OCI-LY7 (cell line): ENCODE measurements at regions of chr1 and their contacts with region 1.

Region 1: DNA sequence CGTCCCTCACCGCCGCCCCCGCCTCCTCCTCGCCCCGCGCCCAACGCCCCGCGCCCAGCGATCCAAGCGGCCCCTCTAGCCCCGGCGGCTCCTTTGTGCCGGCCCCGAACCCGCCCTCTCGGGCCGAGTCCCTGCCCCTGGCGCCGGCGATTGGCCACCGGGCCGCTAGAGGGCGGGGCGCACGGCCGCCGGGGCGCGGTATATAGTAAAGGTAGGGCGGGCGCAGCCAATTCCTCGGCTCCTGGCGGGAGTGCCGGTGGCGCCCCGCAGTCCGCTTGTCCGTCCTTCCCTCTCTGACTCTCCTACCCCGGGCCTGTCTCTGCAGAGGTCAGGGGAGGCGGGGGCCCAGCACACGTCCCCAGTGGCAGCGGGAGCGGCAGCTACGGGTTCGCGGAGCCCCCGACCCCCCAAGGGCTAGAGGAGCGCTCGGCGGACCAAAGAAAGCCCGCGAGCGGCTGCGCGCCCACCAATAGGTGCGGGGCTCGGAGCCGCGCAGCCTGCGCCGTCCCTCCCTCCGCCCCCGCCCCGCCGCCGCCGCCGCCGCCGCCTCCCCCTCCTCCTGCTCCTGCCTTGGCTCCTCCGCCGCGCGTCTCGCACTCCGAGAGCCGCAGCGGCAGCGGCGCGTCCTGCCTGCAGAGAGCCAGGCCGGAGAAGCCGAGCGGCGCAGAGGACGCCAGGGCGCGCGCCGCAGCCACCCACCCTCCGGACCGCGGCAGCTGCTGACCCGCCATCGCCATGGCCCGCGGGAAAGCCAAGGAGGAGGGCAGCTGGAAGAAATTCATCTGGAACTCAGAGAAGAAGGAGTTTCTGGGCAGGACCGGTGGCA is at the start of gene ATP1B1:
- DNase-seq: peak; percentile 89
- H3K4me3 ChIP-seq: peak within 1 kb of the TSS; percentile 94
- H3K27ac ChIP-seq: peak within 1 kb of the TSS; percentile 91
- H3K4me1 ChIP-seq: peaks cover 35% of the 10 kb centered on the region
- CTCF ChIP-seq: 0 out of 2 replicates have a peak, but pooled peaks have one; percentile 10
- total RNA-seq, gene ATP1B1: 14.5 and 17.5 TPM in 2 replicates

Region 2: GRCh38 chr1:169119405-169119804 is 13.1 kb after region 1 on chr1:
- CTCF ChIA-PET with region 1: interaction called, 3 read pairs
- POLR2A ChIA-PET with region 1: interaction called, 17 read pairs
- intact Hi-C with region 1: no loop called
- DNase-seq: no peak
- H3K4me3 ChIP-seq: no peak overlapping the region
- H3K27ac ChIP-seq: no peak overlapping the region
- H3K4me1 ChIP-seq: peaks cover 15% of the 10 kb centered on the region
- CTCF ChIP-seq: no peak

Region 3: DNA sequence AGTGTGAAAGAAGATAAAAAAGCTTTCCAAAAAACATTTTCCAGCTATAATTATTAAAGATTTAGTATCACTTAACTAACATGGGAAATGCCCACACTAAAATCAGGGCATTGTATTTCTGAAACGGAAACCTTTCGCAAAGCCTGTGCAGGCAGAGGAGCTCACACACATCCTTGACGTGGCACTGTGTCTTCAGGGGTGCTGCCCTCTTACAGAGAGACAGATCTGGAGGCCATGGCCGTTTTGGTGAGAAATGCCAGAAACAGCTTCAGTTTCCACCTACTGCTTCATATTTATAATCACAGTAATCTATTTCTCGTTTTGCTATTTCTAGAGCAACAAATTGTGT is 26.9 kb after region 1 on chr1:
- CTCF ChIA-PET with region 1: no interaction called
- POLR2A ChIA-PET with region 1: no interaction called
- intact Hi-C with region 1: no loop called
- DNase-seq: no peak
- H3K4me3 ChIP-seq: no peak overlapping the region
- H3K27ac ChIP-seq: no peak overlapping the region
- H3K4me1 ChIP-seq: no peaks in the 10 kb centered on the region
- CTCF ChIP-seq: no peak

Region 4: GRCh38 chr1:169367486-169368405 is 261.4 kb after region 1 on chr1 and contains the starts of genes BLZF1 and NME7:
- CTCF ChIA-PET with region 1: no interaction called
- POLR2A ChIA-PET with region 1: interaction called, 3 read pairs
- intact Hi-C with region 1: loop called (anchors 5 kb)
- DNase-seq: peak; percentile 97
- H3K4me3 ChIP-seq: peak within 1 kb of the TSS; percentile 95
- H3K27ac ChIP-seq: peak within 1 kb of the TSS; percentile 74
- H3K4me1 ChIP-seq: peaks cover 20% of the 10 kb centered on the region
- CTCF ChIP-seq: no peak
- total RNA-seq, gene BLZF1: 4.9 and 7.1 TPM in 2 replicates
- total RNA-seq, gene NME7: 4.2 and 9.3 TPM in 2 replicates

Region 5: GRCh38 chr1:169794530-169795416 is 688.5 kb after region 1 on chr1 and contains the start of gene METTL18:
- CTCF ChIA-PET with region 1: no interaction called
- POLR2A ChIA-PET with region 1: interaction called, 5 read pairs
- intact Hi-C with region 1: loop called (anchors 2 kb)
- DNase-seq: peak; percentile 95
- H3K4me3 ChIP-seq: peak within 1 kb of the TSS; percentile 85
- H3K27ac ChIP-seq: peak within 1 kb of the TSS; percentile 59
- H3K4me1 ChIP-seq: peaks cover 43% of the 10 kb centered on the region
- CTCF ChIP-seq: peak; percentile 71
- total RNA-seq, gene METTL18: 10.6 and 12.6 TPM in 2 replicates

Region 6: GRCh38 chr1:170531758-170532657 is 1425.7 kb after region 1 on chr1 and contains the start of gene GORAB:
- CTCF ChIA-PET with region 1: no interaction called
- POLR2A ChIA-PET with region 1: no interaction called
- intact Hi-C with region 1: loop called (anchors 5 kb)
- DNase-seq: peak; percentile 90
- H3K4me3 ChIP-seq: peak within 1 kb of the TSS; percentile 97
- H3K27ac ChIP-seq: peak within 1 kb of the TSS; percentile 68
- H3K4me1 ChIP-seq: peaks cover 16% of the 10 kb centered on the region
- CTCF ChIP-seq: no peak
- total RNA-seq, gene GORAB: 11.5 and 19.8 TPM in 2 replicates